ENCODE measurements at regions of chr19 and their contacts with region 1.

Region 1: GRCh38 chr19:16504271-16504670 is 8.1 kb downstream of the C19orf44 start:
- DNase-seq: no peak
- H3K4me3 ChIP-seq: no peak overlapping the region
- H3K27ac ChIP-seq: no peak overlapping the region
- H3K4me1 ChIP-seq: peaks cover 11% of the 10 kb centered on the region
- H3K27me3 ChIP-seq: no peaks in the 10 kb centered on the region
- CTCF ChIP-seq: no peak

Region 2: DNA sequence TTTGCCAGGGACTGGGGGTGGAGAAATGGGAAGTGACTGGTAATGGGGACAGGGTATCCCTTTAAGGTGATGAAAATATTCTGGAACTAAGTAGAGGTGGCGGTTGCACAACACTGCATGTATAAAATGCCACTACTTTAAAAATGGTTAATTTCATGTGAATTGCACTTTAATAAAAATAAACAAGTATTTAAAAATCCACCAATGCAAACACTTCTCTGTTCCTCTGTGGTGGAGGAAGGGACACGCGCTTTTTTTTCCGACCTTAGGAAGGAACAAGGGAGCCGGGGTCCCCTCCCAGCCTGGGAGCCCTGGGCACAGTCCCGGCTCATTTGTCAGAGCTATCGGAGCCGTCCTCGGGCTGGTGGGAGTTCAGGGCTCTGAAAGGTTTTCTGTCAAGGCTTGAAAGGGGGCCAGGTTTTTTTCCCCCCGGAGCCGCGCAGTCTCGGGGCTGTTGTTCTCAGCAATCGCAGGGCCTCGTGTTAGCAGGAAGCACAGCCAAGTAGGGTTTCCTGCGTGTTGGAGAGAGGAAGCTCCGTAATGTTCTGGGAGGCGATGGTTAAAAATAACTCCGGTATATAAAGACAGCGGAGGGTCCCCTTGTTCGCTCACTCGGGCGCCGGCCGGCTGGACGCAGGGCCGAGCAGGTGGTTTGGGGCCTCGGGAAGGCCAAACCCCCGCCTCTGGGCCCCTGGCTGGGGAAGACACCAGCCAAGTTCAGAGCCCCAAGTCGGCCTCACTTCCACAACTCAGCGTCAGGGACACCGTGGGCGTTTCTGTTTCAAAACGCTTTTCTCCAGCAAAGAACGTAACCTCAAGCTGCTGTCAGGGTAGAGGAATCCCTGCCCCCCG is 220.8 kb before region 1 on chr19:
- CTCF ChIA-PET with region 1: no interaction called
- dilution Hi-C with region 1: no loop called
- in situ Hi-C with region 1: no loop called
- intact Hi-C with region 1: no loop called
- DNase-seq: no peak
- H3K4me3 ChIP-seq: no peak overlapping the region
- H3K27ac ChIP-seq: no peak overlapping the region
- H3K4me1 ChIP-seq: peaks cover 5% of the 10 kb centered on the region
- H3K27me3 ChIP-seq: peaks cover 35% of the 10 kb centered on the region
- CTCF ChIP-seq: no peak

Region 3: GRCh38 chr19:16376649-16377048 is 127.6 kb before region 1 on chr19:
- CTCF ChIA-PET with region 1: no interaction called
- dilution Hi-C with region 1: loop called (anchors 5 kb)
- in situ Hi-C with region 1: no loop called
- intact Hi-C with region 1: no loop called
- DNase-seq: no peak
- H3K4me3 ChIP-seq: no peak overlapping the region
- H3K27ac ChIP-seq: no peak overlapping the region
- H3K4me1 ChIP-seq: no peaks in the 10 kb centered on the region
- H3K27me3 ChIP-seq: no peaks in the 10 kb centered on the region
- CTCF ChIP-seq: peak in 1 of 2 donors; percentile 23

Measured in mammary epithelial cell (primary cell).